GM10248 (cell line): ENCODE measurements at regions of chr1 and their contacts with region 1.

Region 1: GRCh38 chr1:42756956-42757891 is 9.6 kb downstream of the P3H1 start:
- DNase-seq: peak; percentile 74
- CTCF ChIP-seq: peak; percentile 63

Region 2: GRCh38 chr1:42747125-42747524 is 10.1 kb before region 1 on chr1:
- CTCF ChIA-PET with region 1: interaction called, 35 read pairs
- POLR2A ChIA-PET with region 1: no interaction called
- DNase-seq: peak; percentile 65
- CTCF ChIP-seq: peak; percentile 59